ENCODE measurements at regions of chr5 and their contacts with region 1.

Region 1: DNA sequence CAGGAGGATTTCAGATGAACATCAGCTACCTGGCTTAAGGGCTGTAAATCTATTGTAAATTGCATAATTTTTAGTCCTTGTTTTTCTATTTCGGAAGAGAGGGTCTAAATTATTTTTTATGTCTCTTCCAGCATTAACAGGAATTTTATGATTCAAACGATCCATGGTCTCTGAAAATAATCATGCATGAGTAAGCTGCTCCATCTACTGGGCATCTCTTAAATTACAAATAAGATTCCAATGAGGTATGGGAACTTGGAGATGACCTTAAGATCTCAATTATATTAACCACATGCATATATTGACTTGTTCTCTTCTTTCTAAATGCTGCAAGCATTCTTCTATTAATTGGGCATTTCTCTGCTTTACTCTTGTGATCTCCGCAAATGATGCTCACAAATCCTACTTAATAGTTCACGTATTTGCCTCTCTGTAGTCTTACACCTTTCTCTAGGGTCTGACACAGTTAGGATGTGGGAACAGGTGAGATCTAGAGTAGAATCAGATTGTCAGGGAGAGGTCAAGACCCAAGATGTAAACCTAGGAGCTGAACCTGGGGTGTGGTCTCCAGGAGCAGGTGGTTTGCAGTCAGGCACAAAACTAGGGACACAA is 86.9 kb downstream of the NUDT12 start:
- DNase-seq: peak; percentile 33
- ATAC-seq: peak; percentile 85
- H3K4me3 ChIP-seq: no peak overlapping the region
- H3K27ac ChIP-seq: no peak overlapping the region
- H3K4me1 ChIP-seq: no peaks in the 10 kb centered on the region
- H3K27me3 ChIP-seq: no peaks in the 10 kb centered on the region
- CTCF ChIP-seq: peak; percentile 49 to 78 (median 64)
- POLR2A ChIP-seq: no peak
- RAD21 ChIP-seq: peak; percentile 84

Region 2: GRCh38 chr5:102554728-102555127 is 921.0 kb before region 1 on chr5:
- CTCF ChIA-PET with region 1: no interaction called
- POLR2A ChIA-PET with region 1: no interaction called
- RAD21 ChIA-PET with region 1: no interaction called
- intact Hi-C with region 1: loop called (anchors 10 kb)
- DNase-seq: peak; percentile 21
- ATAC-seq: peak; percentile 78
- H3K4me3 ChIP-seq: no peak overlapping the region
- H3K27ac ChIP-seq: no peak overlapping the region
- H3K4me1 ChIP-seq: no peaks in the 10 kb centered on the region
- H3K27me3 ChIP-seq: no peaks in the 10 kb centered on the region
- CTCF ChIP-seq: peak; percentile 28 to 61 (median 34); a peak in 5 of 6 replicates
- POLR2A ChIP-seq: no peak
- RAD21 ChIP-seq: peak; percentile 50

Region 3: DNA sequence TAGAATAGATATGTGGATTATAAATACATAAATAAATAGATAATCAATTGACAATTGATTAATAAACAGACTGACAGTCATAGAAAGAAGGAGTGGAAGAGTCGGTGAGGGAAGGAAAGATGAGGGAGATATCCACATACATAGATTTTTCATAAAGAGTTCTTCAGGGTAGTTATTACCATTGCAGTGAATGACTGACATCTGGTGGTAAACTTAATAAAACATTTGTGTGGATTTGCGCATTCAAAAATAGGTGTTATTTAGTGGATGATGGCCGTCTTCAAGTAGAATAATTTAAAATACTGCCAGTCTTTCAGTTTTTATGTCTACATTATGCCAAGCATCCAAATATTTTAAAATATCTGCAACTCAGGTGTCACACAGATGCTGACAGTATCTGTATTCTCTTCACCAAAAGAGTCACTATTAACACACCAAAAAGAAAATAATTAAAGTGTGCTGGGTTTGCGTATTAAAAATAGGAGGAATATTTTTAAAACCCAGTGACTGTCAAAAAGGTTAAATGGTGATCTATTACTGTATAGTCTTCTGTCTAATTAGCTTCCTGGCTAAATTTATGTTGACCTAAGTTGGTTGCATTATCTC is 434.6 kb before region 1 on chr5:
- CTCF ChIA-PET with region 1: no interaction called
- POLR2A ChIA-PET with region 1: no interaction called
- RAD21 ChIA-PET with region 1: no interaction called
- intact Hi-C with region 1: loop called (anchors 10 kb)
- DNase-seq: peak; percentile 49
- ATAC-seq: peak; percentile 61
- H3K4me3 ChIP-seq: no peak overlapping the region
- H3K27ac ChIP-seq: no peak overlapping the region
- H3K4me1 ChIP-seq: no peaks in the 10 kb centered on the region
- H3K27me3 ChIP-seq: no peaks in the 10 kb centered on the region
- CTCF ChIP-seq: peak; percentile 24 to 83 (median 56); a peak in 5 of 6 replicates
- POLR2A ChIP-seq: no peak
- RAD21 ChIP-seq: peak; percentile 84

Region 4: DNA sequence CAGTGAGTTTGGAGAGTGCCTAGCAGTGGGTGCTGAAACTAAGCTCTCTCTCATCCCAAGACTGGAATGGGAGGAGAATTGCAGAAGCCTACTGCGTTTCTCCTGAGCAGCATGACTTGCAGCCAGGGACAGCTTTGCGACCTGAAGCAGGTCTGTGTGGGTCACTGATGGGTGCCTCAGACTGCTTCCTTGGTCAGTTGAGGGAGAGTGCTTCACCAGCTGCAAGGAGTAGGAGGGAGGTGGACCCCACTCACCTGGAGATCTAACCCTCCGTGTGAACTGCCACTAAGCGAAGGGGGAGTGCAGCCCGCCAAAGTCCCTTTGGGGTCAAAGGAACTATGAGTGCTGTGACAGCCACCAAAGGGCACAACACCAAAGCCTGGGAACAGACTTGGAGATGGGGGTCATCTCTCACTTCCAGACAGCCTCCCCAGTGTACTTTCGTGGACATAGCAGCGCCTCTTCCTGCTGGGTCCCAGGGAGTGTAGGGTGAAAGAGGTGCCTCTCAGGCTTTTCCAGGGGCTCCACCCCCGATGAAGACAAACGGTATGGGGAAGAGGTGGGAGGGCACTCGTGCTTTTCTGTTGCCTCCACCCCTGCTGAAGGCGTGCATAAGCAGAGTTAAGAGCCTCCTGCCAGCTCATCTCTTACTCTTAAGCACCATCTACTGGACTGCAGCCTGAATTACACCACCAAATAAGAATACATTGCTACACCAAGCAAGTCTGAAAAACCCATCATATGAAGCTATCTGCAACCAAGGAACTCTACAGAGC is 251.4 kb before region 1 on chr5:
- CTCF ChIA-PET with region 1: interaction called, 10 read pairs
- POLR2A ChIA-PET with region 1: no interaction called
- RAD21 ChIA-PET with region 1: no interaction called
- intact Hi-C with region 1: no loop called
- DNase-seq: peak; percentile 57
- ATAC-seq: peak; percentile 97
- H3K4me3 ChIP-seq: no peak overlapping the region
- H3K27ac ChIP-seq: no peak overlapping the region
- H3K4me1 ChIP-seq: peaks cover 0 to 7% of the 10 kb centered on the region in 2 experiments; a peak in 1 of 4 replicates
- H3K27me3 ChIP-seq: no peaks in the 10 kb centered on the region
- CTCF ChIP-seq: peak; percentile 43 to 73 (median 67); a peak in 5 of 6 replicates
- POLR2A ChIP-seq: no peak
- RAD21 ChIP-seq: peak; percentile 75

Region 5: DNA sequence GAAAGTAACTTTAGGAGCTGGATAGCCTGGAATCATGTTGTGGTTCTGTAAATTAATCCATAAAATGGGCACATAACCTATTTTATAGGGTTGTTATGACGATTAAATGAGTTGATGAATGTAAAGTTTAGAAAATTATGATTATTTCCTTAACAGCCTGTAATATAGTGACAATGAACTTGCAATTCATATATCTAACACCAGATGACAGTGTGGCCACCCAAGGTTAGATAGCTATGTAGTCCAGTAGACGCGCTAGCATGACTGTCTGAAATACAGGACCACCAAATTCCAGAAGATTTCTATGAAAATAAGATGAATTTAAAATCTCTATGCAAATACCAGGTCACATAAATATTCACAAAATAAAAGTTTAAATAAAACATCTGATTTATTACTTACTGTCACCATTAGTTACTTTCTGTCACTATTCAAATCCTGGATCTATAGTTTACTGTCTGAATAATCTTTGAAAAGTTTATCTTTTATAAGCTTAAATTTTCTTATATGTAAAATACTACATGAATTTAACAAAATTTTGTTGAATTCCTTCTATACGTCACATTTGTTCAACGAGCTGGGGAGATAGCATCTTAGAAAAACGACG is 243.2 kb before region 1 on chr5:
- CTCF ChIA-PET with region 1: interaction called, 42 read pairs
- POLR2A ChIA-PET with region 1: no interaction called
- RAD21 ChIA-PET with region 1: interaction called in 1 of 2 experiments, 8 read pairs
- intact Hi-C with region 1: loop called (anchors 1 kb)
- DNase-seq: peak; percentile 36
- ATAC-seq: peak; percentile 81
- H3K4me3 ChIP-seq: no peak overlapping the region
- H3K27ac ChIP-seq: no peak overlapping the region
- H3K4me1 ChIP-seq: no peaks in the 10 kb centered on the region
- H3K27me3 ChIP-seq: no peaks in the 10 kb centered on the region
- CTCF ChIP-seq: peak; percentile 61 to 83 (median 74); a peak in 5 of 6 replicates
- POLR2A ChIP-seq: no peak
- RAD21 ChIP-seq: peak; percentile 75

Region 6: GRCh38 chr5:103745353-103746065 is 269.8 kb after region 1 on chr5:
- CTCF ChIA-PET with region 1: no interaction called
- POLR2A ChIA-PET with region 1: no interaction called
- RAD21 ChIA-PET with region 1: no interaction called
- intact Hi-C with region 1: no loop called
- DNase-seq: no peak
- ATAC-seq: no peak
- H3K4me3 ChIP-seq: no peak overlapping the region
- H3K27ac ChIP-seq: no peak overlapping the region
- H3K4me1 ChIP-seq: no peaks in the 10 kb centered on the region
- H3K27me3 ChIP-seq: no peaks in the 10 kb centered on the region
- CTCF ChIP-seq: no peak
- POLR2A ChIP-seq: no peak
- RAD21 ChIP-seq: no peak

Measured in HCT116 (cell line).